ENCODE measurements at regions of chr7 and their contacts with region 1.

Region 1: GRCh38 chr7:56074371-56074791 is 10.3 kb downstream of the SUMF2 start:
- DNase-seq: peak; percentile 77 to 89
- H3K4me3 ChIP-seq: no peak overlapping the region
- H3K4me3 Mint-ChIP-seq: no peak overlapping the region
- H3K27ac Mint-ChIP-seq: peak overlapping the region; percentile 30
- H3K4me1 ChIP-seq: no peaks in the 10 kb centered on the region
- H3K4me1 Mint-ChIP-seq: peaks cover 13% of the 10 kb centered on the region
- H3K27me3 ChIP-seq: no peaks in the 10 kb centered on the region
- H3K27me3 Mint-ChIP-seq: no peaks in the 10 kb centered on the region
- CTCF ChIP-seq: peak; percentile 81 to 89

Region 2: GRCh38 chr7:55593515-55594318 is 480.7 kb before region 1 on chr7:
- CTCF ChIA-PET with region 1: no interaction called
- POLR2A ChIA-PET with region 1: no interaction called
- intact Hi-C with region 1: loop called (anchors 1 kb)
- DNase-seq: peak; percentile 69 to 80
- H3K4me3 ChIP-seq: no peak overlapping the region
- H3K4me3 Mint-ChIP-seq: no peak overlapping the region
- H3K27ac Mint-ChIP-seq: no peak overlapping the region
- H3K4me1 ChIP-seq: no peaks in the 10 kb centered on the region
- H3K4me1 Mint-ChIP-seq: no peaks in the 10 kb centered on the region
- H3K27me3 ChIP-seq: no peaks in the 10 kb centered on the region
- H3K27me3 Mint-ChIP-seq: peaks cover 10% of the 10 kb centered on the region
- CTCF ChIP-seq: peak; percentile 83 to 84

Region 3: GRCh38 chr7:55641273-55641691 is 433.1 kb before region 1 on chr7:
- CTCF ChIA-PET with region 1: no interaction called
- POLR2A ChIA-PET with region 1: no interaction called
- intact Hi-C with region 1: loop called (anchors 1 kb)
- DNase-seq: peak; percentile 54 to 59
- H3K4me3 ChIP-seq: no peak overlapping the region
- H3K4me3 Mint-ChIP-seq: no peak overlapping the region
- H3K27ac Mint-ChIP-seq: no peak overlapping the region
- H3K4me1 ChIP-seq: no peaks in the 10 kb centered on the region
- H3K4me1 Mint-ChIP-seq: no peaks in the 10 kb centered on the region
- H3K27me3 ChIP-seq: no peaks in the 10 kb centered on the region
- H3K27me3 Mint-ChIP-seq: peaks cover 3% of the 10 kb centered on the region
- CTCF ChIP-seq: peak; percentile 70 to 81

Region 4: DNA sequence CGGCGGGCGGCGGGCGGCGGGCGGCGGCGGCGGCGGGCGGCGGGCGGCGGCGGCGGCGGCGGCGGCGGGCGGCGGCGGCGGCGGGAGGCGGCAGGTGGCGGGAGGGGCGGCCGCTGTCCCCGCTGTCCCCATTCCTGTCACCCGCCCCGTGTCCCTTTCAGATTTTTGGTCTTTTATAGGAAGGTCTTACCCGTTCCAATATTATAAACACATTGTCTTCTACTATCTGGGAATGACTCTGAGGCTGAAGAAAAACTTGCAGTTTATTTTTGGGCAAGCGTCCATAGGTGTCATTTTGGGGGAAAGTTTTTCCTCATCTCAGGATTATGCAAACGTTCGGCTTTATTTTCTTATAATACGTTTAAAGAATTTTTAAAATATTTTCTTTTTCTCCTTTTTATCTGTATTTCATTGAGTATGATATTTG is 186.5 kb before region 1 on chr7:
- CTCF ChIA-PET with region 1: no interaction called
- POLR2A ChIA-PET with region 1: no interaction called
- intact Hi-C with region 1: loop called (anchors 10 kb)
- DNase-seq: peak in 1 of 2 experiments; percentile 7
- H3K4me3 ChIP-seq: peak overlapping the region; percentile 66
- H3K4me3 Mint-ChIP-seq: peak overlapping the region; percentile 97
- H3K27ac Mint-ChIP-seq: peak overlapping the region; percentile 99
- H3K4me1 ChIP-seq: no peaks in the 10 kb centered on the region
- H3K4me1 Mint-ChIP-seq: no peaks in the 10 kb centered on the region
- H3K27me3 ChIP-seq: no peaks in the 10 kb centered on the region
- H3K27me3 Mint-ChIP-seq: peaks cover 4% of the 10 kb centered on the region
- CTCF ChIP-seq: no peak

Region 5: DNA sequence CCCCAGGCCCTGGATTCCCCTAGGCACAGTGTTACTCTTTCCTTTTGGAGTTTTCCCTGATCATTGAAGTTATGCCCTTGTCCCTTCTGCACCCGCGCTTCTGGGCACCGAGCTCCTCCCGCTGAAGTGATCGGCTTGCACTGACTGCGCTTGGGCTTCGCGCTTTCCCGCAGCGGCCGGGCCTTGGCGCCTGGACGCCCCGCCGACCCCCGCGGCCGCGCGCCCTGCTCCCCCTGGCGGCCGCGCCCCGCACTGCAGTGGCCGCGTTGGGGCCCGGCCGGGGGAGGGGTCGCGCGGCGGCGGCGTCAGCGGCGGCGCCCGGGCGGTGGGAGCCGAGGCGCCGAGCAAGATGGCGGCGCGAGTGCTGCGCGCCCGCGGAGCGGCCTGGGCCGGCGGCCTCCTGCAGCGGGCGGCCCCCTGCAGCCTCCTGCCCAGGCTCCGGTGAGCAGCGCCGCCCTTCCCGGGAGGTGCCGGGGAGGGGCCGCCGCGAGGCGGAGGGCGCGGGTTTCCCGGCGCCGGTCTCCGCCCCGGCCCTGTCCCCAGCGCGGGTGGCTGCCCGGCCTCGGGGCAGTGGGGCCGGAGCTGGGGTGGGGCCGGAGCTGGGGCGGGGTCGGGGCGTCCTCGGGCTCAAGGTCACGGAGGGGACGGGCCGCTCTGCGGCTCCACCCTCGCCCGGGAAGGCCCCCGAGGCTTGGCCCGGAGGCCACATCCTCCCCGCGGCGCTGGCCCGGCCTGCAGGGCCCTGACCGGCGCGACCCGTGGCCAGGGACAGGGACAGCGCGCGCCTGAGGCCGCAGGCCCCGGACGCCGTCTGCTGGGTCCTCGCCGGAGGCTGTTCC is 109.9 kb before region 1 on chr7 and contains the start of gene NIPSNAP2:
- CTCF ChIA-PET with region 1: no interaction called
- POLR2A ChIA-PET with region 1: no interaction called
- intact Hi-C with region 1: loop called (anchors 1 kb)
- DNase-seq: peak; percentile 86 to 91
- H3K4me3 ChIP-seq: peak within 1 kb of the TSS; percentile 46
- H3K4me3 Mint-ChIP-seq: peak within 1 kb of the TSS; percentile 82
- H3K27ac Mint-ChIP-seq: peak within 1 kb of the TSS; percentile 83
- H3K4me1 ChIP-seq: no peaks in the 10 kb centered on the region
- H3K4me1 Mint-ChIP-seq: no peaks in the 10 kb centered on the region
- H3K27me3 ChIP-seq: no peaks in the 10 kb centered on the region; the same call in 1 of the 2 replicates
- H3K27me3 Mint-ChIP-seq: peaks cover 4% of the 10 kb centered on the region
- CTCF ChIP-seq: peak; percentile 6 to 39
- total RNA-seq, gene NIPSNAP2: 59.3 and 63.4 TPM in 2 replicates

Region 6: GRCh38 chr7:56026538-56026937 is 47.8 kb before region 1 on chr7:
- CTCF ChIA-PET with region 1: no interaction called
- POLR2A ChIA-PET with region 1: no interaction called
- intact Hi-C with region 1: no loop called
- DNase-seq: no peak
- H3K4me3 ChIP-seq: no peak overlapping the region
- H3K4me3 Mint-ChIP-seq: peak overlapping the region; percentile 6
- H3K27ac Mint-ChIP-seq: peak overlapping the region; percentile 58
- H3K4me1 ChIP-seq: peaks cover 29% of the 10 kb centered on the region
- H3K4me1 Mint-ChIP-seq: peaks cover 23% of the 10 kb centered on the region
- H3K27me3 ChIP-seq: no peaks in the 10 kb centered on the region
- H3K27me3 Mint-ChIP-seq: no peaks in the 10 kb centered on the region
- CTCF ChIP-seq: no peak

Region 7: GRCh38 chr7:56199639-56200038 is 125.3 kb after region 1 on chr7:
- CTCF ChIA-PET with region 1: no interaction called
- POLR2A ChIA-PET with region 1: no interaction called
- intact Hi-C with region 1: no loop called
- DNase-seq: no peak
- H3K4me3 ChIP-seq: no peak overlapping the region
- H3K4me3 Mint-ChIP-seq: no peak overlapping the region
- H3K27ac Mint-ChIP-seq: no peak overlapping the region
- H3K4me1 ChIP-seq: no peaks in the 10 kb centered on the region; the same call in 1 of the 2 replicates
- H3K4me1 Mint-ChIP-seq: no peaks in the 10 kb centered on the region
- H3K27me3 ChIP-seq: no peaks in the 10 kb centered on the region
- H3K27me3 Mint-ChIP-seq: no peaks in the 10 kb centered on the region
- CTCF ChIP-seq: no peak

Region 8: GRCh38 chr7:56578617-56579016 is 504.2 kb after region 1 on chr7:
- CTCF ChIA-PET with region 1: no interaction called
- POLR2A ChIA-PET with region 1: no interaction called
- intact Hi-C with region 1: no loop called
- DNase-seq: peak; percentile 48 to 51
- H3K4me3 ChIP-seq: no peak overlapping the region
- H3K4me3 Mint-ChIP-seq: no peak overlapping the region
- H3K27ac Mint-ChIP-seq: no peak overlapping the region
- H3K4me1 ChIP-seq: peaks cover 12% of the 10 kb centered on the region
- H3K4me1 Mint-ChIP-seq: no peaks in the 10 kb centered on the region
- H3K27me3 ChIP-seq: no peaks in the 10 kb centered on the region
- H3K27me3 Mint-ChIP-seq: no peaks in the 10 kb centered on the region
- CTCF ChIP-seq: no peak

Measured in Caco-2 (cell line).